ENCODE measurements at regions of chr9 and their contacts with region 1.

Region 1: GRCh38 chr9:95127249-95128176 is 190.0 kb downstream of the FANCC start:
- H3K4me3 ChIP-seq: no peak overlapping the region
- H3K27ac ChIP-seq: no peak overlapping the region
- H3K4me1 ChIP-seq: 0 out of 2 replicates have a peak, but pooled peaks cover 9% of the 10 kb centered on the region
- CTCF ChIP-seq: peak; percentile 85

Region 2: DNA sequence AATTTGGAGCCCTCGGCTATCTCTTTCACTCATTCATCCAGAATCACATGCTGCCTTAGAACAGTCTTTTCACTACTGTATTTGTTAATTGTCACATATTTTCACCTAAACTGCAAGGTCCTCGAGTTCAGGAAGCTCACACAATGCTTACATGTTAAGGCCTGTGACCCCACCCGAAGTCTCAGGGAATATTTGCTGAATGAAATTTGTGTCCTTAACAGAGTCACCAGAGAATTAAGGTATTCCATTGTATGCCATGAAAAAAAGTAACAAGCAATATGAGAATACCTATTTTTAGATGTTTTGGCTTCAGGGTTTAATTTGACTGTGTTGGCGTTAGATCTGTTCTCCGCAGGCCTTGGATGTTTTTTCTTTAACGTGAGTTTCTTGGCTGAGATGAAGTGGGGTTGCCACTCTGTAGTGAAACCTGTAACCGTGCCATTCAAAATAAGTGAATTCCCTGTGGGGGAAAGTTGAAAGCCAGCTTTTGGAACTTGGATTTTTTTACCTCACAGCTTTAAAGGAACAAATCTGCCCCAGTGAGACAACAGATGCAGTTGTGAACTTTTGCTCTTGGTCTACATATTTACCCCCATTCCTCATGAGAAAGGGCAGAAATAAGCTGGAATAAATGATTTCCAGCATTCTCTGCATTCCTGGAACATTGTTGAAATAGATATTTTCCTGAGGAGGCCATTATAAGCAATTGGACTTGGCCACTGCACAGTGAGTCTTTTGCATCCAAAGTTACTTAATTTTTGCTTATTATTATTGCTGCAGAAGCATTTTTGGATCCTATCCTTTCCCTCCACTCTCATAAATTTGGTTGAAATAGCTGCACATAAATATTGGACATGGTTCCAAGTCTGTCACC is 452.3 kb before region 1 on chr9:
- CTCF ChIA-PET with region 1: interaction called, 133 read pairs
- POLR2A ChIA-PET with region 1: no interaction called
- H3K4me3 ChIP-seq: no peak overlapping the region
- H3K27ac ChIP-seq: no peak overlapping the region
- H3K4me1 ChIP-seq: no peaks in the 10 kb centered on the region
- CTCF ChIP-seq: no peak

Region 3: GRCh38 chr9:94950579-94951323 is 176.8 kb before region 1 on chr9:
- CTCF ChIA-PET with region 1: interaction called, 11 read pairs
- POLR2A ChIA-PET with region 1: no interaction called
- H3K4me3 ChIP-seq: no peak overlapping the region
- H3K27ac ChIP-seq: no peak overlapping the region
- H3K4me1 ChIP-seq: no peaks in the 10 kb centered on the region
- CTCF ChIP-seq: no peak

Region 4: DNA sequence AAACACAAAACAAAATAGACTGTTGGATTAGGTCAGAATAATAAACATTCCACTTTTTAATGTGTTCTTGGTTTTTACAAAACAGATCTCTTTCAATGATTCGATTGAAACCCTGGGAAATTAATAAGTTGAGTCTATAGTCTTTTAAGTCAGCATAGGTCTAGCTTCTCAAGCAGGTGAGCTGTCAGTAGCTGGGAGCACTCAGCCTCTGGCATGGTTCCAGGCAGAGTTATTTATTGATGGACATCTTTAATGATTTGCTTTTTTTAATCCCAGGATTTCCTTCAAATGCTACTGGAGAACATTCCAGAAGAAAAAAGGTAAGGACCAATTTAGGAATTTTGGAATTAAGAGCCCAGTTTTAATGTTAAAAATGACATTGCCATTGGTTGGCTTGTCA is 160.0 kb before region 1 on chr9:
- CTCF ChIA-PET with region 1: no interaction called
- POLR2A ChIA-PET with region 1: no interaction called
- H3K4me3 ChIP-seq: no peak overlapping the region
- H3K27ac ChIP-seq: no peak overlapping the region
- H3K4me1 ChIP-seq: no peaks in the 10 kb centered on the region
- CTCF ChIP-seq: no peak

Region 5: DNA sequence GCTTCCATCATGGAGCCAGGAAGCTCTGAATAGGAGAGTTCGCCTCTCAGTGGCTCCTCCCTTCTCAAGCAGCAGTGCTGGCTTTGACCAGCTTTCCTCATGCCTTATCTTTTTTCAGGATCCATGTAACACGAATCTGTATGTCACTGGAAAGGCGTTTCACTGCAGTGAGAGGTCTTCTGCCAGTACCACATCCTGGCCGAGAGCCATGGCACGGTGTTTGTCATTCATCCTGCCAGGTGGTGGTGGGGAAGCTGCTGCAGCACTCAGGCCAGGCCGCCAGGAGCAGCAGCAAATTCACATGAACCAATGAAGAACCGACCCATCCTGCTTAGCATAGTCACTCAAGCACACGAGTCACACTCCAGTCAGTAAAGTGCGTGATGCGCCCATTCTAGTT is 11.0 kb after region 1 on chr9:
- CTCF ChIA-PET with region 1: interaction called, 21 read pairs
- POLR2A ChIA-PET with region 1: no interaction called
- H3K4me3 ChIP-seq: no peak overlapping the region
- H3K27ac ChIP-seq: no peak overlapping the region
- H3K4me1 ChIP-seq: no peaks in the 10 kb centered on the region
- CTCF ChIP-seq: no peak

Region 6: DNA sequence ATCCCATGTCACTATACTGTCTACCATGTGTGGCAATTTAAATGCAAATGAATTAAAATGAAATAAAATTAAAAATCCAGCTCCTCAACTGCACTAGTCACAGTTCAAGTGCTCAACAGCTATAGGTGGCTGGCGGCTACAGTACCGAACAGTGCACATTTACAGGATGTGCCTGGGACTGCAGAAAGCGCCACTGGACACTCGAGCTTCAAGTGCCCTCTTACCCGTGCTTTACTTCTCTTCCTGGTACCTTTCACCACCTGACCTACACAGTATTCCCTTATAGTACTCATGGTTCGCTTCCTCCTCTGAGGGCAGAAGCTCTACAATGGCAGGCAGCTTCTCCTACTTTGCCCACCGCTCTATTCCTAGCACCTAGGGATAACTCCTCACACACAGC is 23.4 kb after region 1 on chr9:
- CTCF ChIA-PET with region 1: interaction called, 15 read pairs
- POLR2A ChIA-PET with region 1: no interaction called
- H3K4me3 ChIP-seq: no peak overlapping the region
- H3K27ac ChIP-seq: no peak overlapping the region
- H3K4me1 ChIP-seq: no peaks in the 10 kb centered on the region
- CTCF ChIP-seq: no peak

Region 7: GRCh38 chr9:95167998-95168397 is 40.5 kb after region 1 on chr9:
- CTCF ChIA-PET with region 1: interaction called, 34 read pairs
- POLR2A ChIA-PET with region 1: no interaction called
- H3K4me3 ChIP-seq: no peak overlapping the region
- H3K27ac ChIP-seq: no peak overlapping the region
- H3K4me1 ChIP-seq: no peaks in the 10 kb centered on the region
- CTCF ChIP-seq: no peak

Region 8: DNA sequence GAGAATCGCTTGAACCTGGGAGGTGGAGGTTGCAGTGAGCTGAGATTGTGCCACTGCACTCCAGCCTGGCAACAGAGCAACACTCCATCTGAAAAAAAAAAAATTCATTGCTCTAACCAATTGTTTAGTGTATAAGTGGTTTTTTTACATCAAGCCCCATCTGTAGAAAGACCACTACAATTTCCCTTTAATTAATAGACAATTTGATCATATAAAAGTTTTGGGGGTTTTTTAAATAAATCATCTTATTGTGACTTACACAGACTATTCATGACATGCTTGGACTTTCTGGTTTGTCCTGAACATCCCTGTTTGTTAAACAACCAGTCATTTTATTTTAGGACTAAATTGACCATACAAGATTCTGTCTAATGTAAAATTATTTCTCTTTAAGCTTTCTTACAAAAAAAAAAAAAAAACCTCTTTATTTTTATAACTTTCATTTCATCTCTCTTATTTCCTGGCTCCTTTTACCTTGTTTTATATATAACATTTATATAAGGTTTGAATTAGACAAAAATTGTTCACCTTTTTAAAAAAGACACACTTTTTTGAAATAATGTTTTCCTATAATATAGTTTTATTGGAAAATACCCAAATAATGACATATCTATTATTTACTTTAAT is 199.8 kb after region 1 on chr9:
- CTCF ChIA-PET with region 1: no interaction called
- POLR2A ChIA-PET with region 1: no interaction called
- H3K4me3 ChIP-seq: no peak overlapping the region
- H3K27ac ChIP-seq: no peak overlapping the region
- H3K4me1 ChIP-seq: no peaks in the 10 kb centered on the region
- CTCF ChIP-seq: no peak